ENCODE measurements at regions of chr9 and their contacts with region 1.

Region 1: DNA sequence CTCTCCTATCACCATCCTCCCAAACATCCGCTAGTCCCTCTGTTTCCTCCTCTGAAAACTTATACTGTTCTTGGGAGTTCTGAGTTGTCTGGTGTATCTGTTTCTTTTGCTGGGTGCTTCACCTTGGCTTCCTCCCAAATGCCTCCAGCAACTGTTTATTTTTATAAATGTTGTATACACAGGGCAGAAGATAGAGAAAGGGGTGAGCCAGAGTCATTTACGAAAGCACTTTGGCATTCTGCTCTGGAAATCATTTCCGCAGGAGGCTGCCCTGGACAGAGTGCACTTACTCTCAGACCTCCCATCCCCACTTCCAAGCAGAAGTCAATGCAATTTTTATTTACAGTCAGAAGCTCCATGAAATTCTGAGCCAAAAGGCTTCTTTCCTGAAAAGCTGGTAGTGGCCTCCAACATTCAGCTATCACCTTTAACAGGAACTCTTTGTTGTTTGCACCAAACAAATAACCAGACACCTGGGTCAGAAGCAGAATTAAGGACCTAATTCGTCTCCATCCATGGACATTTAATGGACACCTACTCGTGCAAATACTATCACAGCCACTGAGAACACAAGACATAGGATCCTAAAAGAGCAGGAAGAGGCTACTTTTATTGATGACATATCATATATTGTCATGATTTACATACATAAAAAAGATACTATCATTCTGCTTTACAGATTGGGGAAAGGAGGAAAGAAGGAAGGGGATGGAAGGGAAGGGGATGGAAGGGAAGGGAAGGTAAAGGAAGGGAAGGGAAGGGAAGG is 229.5 kb upstream of the PAPPA start:
- DNase-seq: peak in 1 of 2 donors; percentile 42
- ATAC-seq: peak; percentile 65 to 99 (median 96)
- H3K4me3 ChIP-seq: no peak overlapping the region
- H3K27ac ChIP-seq: peak overlapping the region in 6 of 10 donors; percentile 4 to 61 (median 54)
- H3K4me1 ChIP-seq: peaks cover 0 to 15% (median 5%) of the 10 kb centered on the region in 9 donors
- H3K27me3 ChIP-seq: no peaks in the 10 kb centered on the region
- CTCF ChIP-seq: no peak

Region 2: GRCh38 chr9:115944166-115944948 is 20.3 kb after region 1 on chr9:
- intact Hi-C with region 1: loop called in 1 of 10 experiments (anchors 2 kb)
- DNase-seq: peak; percentile 59 to 62
- ATAC-seq: peak; percentile 85 to 98 (median 94)
- H3K4me3 ChIP-seq: no peak overlapping the region
- H3K27ac ChIP-seq: peak overlapping the region; percentile 66 to 87 (median 79)
- H3K4me1 ChIP-seq: peaks cover 5 to 39% (median 19%) of the 10 kb centered on the region in 9 donors
- H3K27me3 ChIP-seq: no peaks in the 10 kb centered on the region
- CTCF ChIP-seq: no peak

Region 3: GRCh38 chr9:115978659-115979096 is 54.6 kb after region 1 on chr9:
- intact Hi-C with region 1: no loop called
- DNase-seq: no peak
- ATAC-seq: no peak
- H3K4me3 ChIP-seq: no peak overlapping the region
- H3K27ac ChIP-seq: no peak overlapping the region
- H3K4me1 ChIP-seq: peaks cover 0 to 9% (median 0%) of the 10 kb centered on the region in 9 donors
- H3K27me3 ChIP-seq: no peaks in the 10 kb centered on the region
- CTCF ChIP-seq: no peak

Region 4: DNA sequence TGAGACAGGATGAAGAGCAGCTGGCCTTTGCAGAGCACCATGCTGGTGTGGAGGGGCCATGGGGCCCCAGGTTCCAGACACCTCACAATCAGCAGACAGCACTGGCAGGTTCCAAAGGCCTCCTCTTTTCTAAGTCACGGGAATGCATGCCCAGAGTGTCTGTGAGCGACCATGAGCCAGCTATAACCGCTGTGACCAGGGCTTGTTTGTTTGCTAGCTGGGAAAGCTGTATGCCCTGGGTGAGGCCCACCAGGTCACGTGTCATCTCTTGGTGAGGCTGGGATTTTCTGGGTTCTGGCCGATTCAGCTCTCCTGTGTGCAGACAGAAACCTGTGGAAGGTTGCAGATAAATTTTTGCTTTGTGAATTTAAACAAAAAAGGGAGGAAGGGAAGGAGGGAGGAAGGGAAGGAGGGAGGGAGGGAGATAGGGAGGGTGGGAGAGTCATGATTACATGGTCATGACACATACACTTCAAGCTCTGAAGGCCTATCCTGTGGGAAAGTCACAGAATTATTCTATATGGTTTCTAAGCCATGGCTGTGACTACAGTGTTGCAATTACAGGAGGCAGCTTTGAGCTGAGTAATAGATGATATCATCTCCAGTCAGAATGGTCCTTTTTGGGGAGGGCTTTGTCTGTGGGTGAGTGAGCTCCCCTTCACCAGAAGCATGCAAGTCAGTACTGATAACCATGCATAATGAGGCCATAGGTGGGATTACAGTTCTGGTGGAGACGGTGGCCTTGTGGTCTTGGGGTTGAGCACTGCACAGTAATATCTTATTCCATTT is 266.7 kb after region 1 on chr9:
- intact Hi-C with region 1: no loop called
- DNase-seq: no peak
- ATAC-seq: no peak
- H3K4me3 ChIP-seq: no peak overlapping the region
- H3K27ac ChIP-seq: no peak overlapping the region
- H3K4me1 ChIP-seq: no peaks in the 10 kb centered on the region
- H3K27me3 ChIP-seq: no peaks in the 10 kb centered on the region
- CTCF ChIP-seq: no peak